AG04450 (cell line): ENCODE measurements at regions of chr19 and their contacts with region 1.

Region 1: DNA sequence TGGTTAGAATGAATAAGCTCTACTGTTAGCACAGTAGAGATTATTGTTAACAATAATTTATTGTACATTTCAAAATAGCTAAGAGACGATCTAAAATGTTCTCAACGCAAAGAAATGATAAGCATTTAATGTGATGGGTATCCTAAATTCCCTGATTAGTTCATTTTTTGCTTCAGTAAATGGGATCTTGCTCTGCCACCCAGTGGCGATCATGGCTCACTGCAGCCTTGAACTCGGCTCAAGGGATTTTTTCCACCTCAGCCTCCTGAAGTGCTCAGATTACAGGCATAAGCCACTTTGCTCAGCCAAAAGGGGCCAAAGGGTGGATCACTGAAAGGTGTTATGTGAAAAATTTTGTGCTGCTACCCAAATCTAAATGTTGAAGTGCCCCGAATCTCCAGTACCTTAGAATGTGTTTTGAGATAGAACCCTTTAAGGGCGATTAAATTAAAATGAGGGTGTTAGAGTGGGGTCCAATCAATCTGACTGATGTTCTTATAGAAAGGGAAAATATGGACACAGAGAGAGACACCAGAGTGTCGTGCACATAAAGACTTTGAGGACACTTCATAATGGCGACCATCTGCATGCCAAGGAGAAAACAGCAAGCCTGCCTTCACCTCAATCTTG is 31.5 kb upstream of the ZNF766 start:
- DNase-seq: peak; percentile 54
- H3K4me3 ChIP-seq: no peak overlapping the region
- H3K27ac ChIP-seq: no peak overlapping the region
- H3K27me3 ChIP-seq: no peaks in the 10 kb centered on the region
- CTCF ChIP-seq: peak; percentile 91

Region 2: DNA sequence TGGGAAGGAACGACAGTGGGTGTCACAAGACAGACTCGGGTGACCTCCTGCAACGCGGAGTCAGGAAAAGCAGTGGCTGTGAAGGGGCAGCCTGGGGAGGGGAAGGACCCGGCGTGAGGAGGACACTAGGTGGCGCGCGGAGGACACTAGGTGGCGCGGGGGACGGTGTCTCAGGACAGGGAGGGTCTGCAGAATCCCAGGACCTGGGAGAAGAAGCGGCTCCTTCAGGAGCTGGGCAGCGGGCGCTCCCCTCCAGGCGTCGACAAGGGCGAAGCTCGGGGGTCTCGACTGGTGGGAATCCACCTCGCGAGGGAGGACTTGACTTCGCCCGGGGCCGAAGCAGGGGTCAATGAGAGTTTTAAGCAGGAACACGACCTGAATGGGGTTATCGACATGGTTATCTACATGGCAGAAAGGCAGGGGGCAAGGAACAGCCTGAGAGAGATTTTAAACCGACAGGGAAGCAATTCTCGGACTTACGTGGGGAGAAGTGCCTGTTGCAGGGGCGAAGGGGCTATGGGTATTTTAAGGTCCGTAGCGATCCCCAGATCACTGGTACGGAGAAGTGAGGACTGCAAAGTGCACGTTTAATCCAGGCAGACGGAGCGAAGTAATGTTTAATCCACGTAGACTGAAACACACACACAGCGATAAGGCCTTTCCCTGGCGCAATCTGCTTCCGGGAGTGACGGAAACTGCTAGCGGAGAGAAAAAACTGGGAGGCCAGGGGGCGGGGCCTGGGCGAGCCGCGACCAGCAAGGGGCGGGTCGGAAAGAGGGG is 98.4 kb before region 1 on chr19 and contains the start of gene ZNF616:
- CTCF ChIA-PET with region 1: interaction called, 37 read pairs
- POLR2A ChIA-PET with region 1: no interaction called
- DNase-seq: peak; percentile 81
- H3K4me3 ChIP-seq: peak within 1 kb of the TSS; percentile 75
- H3K27ac ChIP-seq: peak within 1 kb of the TSS; percentile 87
- H3K27me3 ChIP-seq: no peaks in the 10 kb centered on the region
- CTCF ChIP-seq: peak; percentile 69
- polyA plus RNA-seq, gene ZNF616: 5.5 and 6.2 TPM in 2 replicates

Region 3: GRCh38 chr19:52248241-52248640 is 10.4 kb after region 1 on chr19:
- CTCF ChIA-PET with region 1: interaction called, 11 read pairs
- POLR2A ChIA-PET with region 1: no interaction called
- DNase-seq: no peak
- H3K4me3 ChIP-seq: no peak overlapping the region
- H3K27ac ChIP-seq: no peak overlapping the region
- H3K27me3 ChIP-seq: no peaks in the 10 kb centered on the region
- CTCF ChIP-seq: peak; percentile 45